CD14-positive monocyte (primary cell): ENCODE measurements at regions of chr4 and their contacts with region 1.

Region 1: GRCh38 chr4:121177246-121178137 is 13.4 kb upstream of the TNIP3 start:
- DNase-seq: peak; percentile 59 to 74 (median 68)
- H3K4me3 ChIP-seq: peak overlapping the region in 1 of 3 experiments; percentile 53
- H3K4me3 Mint-ChIP-seq: peak overlapping the region; percentile 32 to 74
- H3K27ac ChIP-seq: peak overlapping the region in 1 of 2 donors; percentile 70
- H3K27ac Mint-ChIP-seq: peak overlapping the region; percentile 34 to 90 (median 83)
- H3K4me1 ChIP-seq: peaks cover 30 to 40% of the 10 kb centered on the region in 2 donors
- H3K4me1 Mint-ChIP-seq: peaks cover 47% of the 10 kb centered on the region
- H3K27me3 ChIP-seq: no peaks in the 10 kb centered on the region
- H3K27me3 Mint-ChIP-seq: peaks cover 0 to 2% (median 2%) of the 10 kb centered on the region in 3 donors
- CTCF ChIP-seq: no peak

Region 2: GRCh38 chr4:120524237-120524636 is 653.3 kb before region 1 on chr4:
- intact Hi-C with region 1: no loop called
- DNase-seq: no peak
- H3K4me3 ChIP-seq: no peak overlapping the region
- H3K4me3 Mint-ChIP-seq: no peak overlapping the region
- H3K27ac ChIP-seq: no peak overlapping the region
- H3K27ac Mint-ChIP-seq: peak overlapping the region in 1 of 7 donors; percentile 12
- H3K4me1 ChIP-seq: no peaks in the 10 kb centered on the region
- H3K4me1 Mint-ChIP-seq: no peaks in the 10 kb centered on the region
- H3K27me3 ChIP-seq: no peaks in the 10 kb centered on the region
- H3K27me3 Mint-ChIP-seq: peaks cover 0 to 1% (median 0%) of the 10 kb centered on the region in 3 donors
- CTCF ChIP-seq: no peak

Region 3: GRCh38 chr4:121252224-121252806 is 74.8 kb after region 1 on chr4:
- intact Hi-C with region 1: loop called in 1 of 2 experiments (anchors 10 kb)
- DNase-seq: peak; percentile 44 to 60 (median 60)
- H3K4me3 ChIP-seq: no peak overlapping the region
- H3K4me3 Mint-ChIP-seq: no peak overlapping the region
- H3K27ac ChIP-seq: no peak overlapping the region
- H3K27ac Mint-ChIP-seq: no peak overlapping the region
- H3K4me1 ChIP-seq: peaks cover 23 to 25% of the 10 kb centered on the region in 2 donors
- H3K4me1 Mint-ChIP-seq: peaks cover 21% of the 10 kb centered on the region
- H3K27me3 ChIP-seq: no peaks in the 10 kb centered on the region
- H3K27me3 Mint-ChIP-seq: peaks cover 0 to 2% (median 0%) of the 10 kb centered on the region in 3 donors
- CTCF ChIP-seq: peak; percentile 81

Region 4: GRCh38 chr4:122548452-122548851 is 1371.0 kb after region 1 on chr4:
- intact Hi-C with region 1: no loop called
- DNase-seq: no peak
- H3K4me3 ChIP-seq: no peak overlapping the region
- H3K4me3 Mint-ChIP-seq: no peak overlapping the region
- H3K27ac ChIP-seq: no peak overlapping the region
- H3K27ac Mint-ChIP-seq: no peak overlapping the region
- H3K4me1 ChIP-seq: no peaks in the 10 kb centered on the region
- H3K4me1 Mint-ChIP-seq: no peaks in the 10 kb centered on the region
- H3K27me3 ChIP-seq: peaks cover 0 to 2% of the 10 kb centered on the region in 2 donors
- H3K27me3 Mint-ChIP-seq: peaks cover 3 to 12% (median 5%) of the 10 kb centered on the region in 3 donors
- CTCF ChIP-seq: no peak